ENCODE measurements at regions of chr12 and their contacts with region 1.

Region 1: GRCh38 chr12:39443081-39443928 is at the start of gene KIF21A:
- DNase-seq: peak; percentile 87 to 95 (median 88)
- ATAC-seq: peak; percentile 96
- H3K4me3 ChIP-seq: peak within 1 kb of the TSS; percentile 86
- H3K27ac ChIP-seq: peak within 1 kb of the TSS; percentile 90
- H3K4me1 ChIP-seq: peaks cover 21 to 24% of the 10 kb centered on the region in 2 experiments; a peak in 4 of 5 replicates
- H3K27me3 ChIP-seq: no peaks in the 10 kb centered on the region
- CTCF ChIP-seq: peak; percentile 52 to 95 (median 75)
- EP300 ChIP-seq: no peak
- POLR2A ChIP-seq: peak; percentile 92
- RAD21 ChIP-seq: peak; percentile 48 to 54
- polyA plus RNA-seq, gene KIF21A: 17.7 to 18.8 TPM

Region 2: DNA sequence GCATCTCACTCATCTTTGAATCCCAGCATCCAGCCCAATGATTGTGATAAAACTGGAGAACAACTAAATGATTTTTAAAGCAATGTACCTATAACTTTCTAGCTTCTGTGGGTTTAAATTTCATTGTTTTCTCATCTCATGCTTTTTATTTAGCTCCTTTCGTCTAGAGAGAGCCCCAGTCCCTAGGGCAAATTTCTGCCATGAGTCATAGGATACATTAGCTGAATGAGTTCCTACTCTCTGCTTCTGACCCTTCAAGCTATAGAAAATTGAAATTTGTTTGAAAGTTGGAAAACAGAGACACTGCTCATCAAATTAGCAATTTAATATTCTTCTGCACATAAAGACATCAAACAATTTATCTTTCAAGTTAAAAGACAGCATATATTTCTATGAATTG is 114.3 kb before region 1 on chr12:
- CTCF ChIA-PET with region 1: no interaction called
- POLR2A ChIA-PET with region 1: no interaction called
- in situ Hi-C with region 1: no loop called
- intact Hi-C with region 1: loop called (anchors 5 kb)
- DNase-seq: no peak
- ATAC-seq: no peak
- H3K4me3 ChIP-seq: no peak overlapping the region
- H3K27ac ChIP-seq: no peak overlapping the region
- H3K4me1 ChIP-seq: no peaks in the 10 kb centered on the region
- H3K27me3 ChIP-seq: no peaks in the 10 kb centered on the region
- CTCF ChIP-seq: no peak
- EP300 ChIP-seq: no peak
- POLR2A ChIP-seq: no peak
- RAD21 ChIP-seq: no peak

Region 3: DNA sequence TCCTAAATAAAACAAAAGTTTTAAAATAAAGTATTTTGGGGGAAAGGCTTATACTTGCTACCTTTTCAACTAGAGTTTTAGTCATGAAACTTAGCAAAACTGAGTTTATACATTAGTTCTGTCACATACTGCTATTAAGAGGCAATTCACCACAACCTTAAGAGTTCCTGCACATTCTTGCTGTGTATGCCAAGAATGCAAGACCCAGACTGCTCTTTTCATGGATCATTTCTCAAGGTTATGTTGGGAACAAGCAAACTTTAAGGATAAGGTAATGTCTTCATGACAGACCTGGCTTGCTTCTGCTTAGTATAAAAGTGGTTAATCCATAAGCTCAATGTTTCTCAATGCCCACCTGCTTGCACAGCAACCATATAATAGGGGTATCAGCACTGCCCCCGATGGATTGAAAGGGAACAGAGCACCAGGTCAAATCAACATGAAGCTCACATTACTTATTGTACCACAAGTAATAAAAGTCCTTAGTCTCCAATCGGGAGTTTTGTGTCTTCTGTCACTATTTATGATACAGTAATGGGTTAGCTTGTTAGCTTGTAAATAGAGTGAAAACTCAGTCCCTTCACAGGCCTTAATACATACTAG is 68.0 kb before region 1 on chr12:
- CTCF ChIA-PET with region 1: no interaction called
- POLR2A ChIA-PET with region 1: no interaction called
- in situ Hi-C with region 1: no loop called
- intact Hi-C with region 1: loop called (anchors 5 kb)
- DNase-seq: peak in 1 of 4 experiments; percentile 5
- ATAC-seq: peak; percentile 71
- H3K4me3 ChIP-seq: no peak overlapping the region
- H3K27ac ChIP-seq: no peak overlapping the region
- H3K4me1 ChIP-seq: peaks cover 0 to 8% of the 10 kb centered on the region in 2 experiments; a peak in 1 of 5 replicates
- H3K27me3 ChIP-seq: no peaks in the 10 kb centered on the region
- CTCF ChIP-seq: peak; percentile 8 to 39 (median 14); a peak in 1 of 6 replicates
- EP300 ChIP-seq: no peak
- POLR2A ChIP-seq: no peak
- RAD21 ChIP-seq: no peak

Region 4: GRCh38 chr12:39660101-39660500 is 216.8 kb after region 1 on chr12:
- CTCF ChIA-PET with region 1: no interaction called
- POLR2A ChIA-PET with region 1: no interaction called
- in situ Hi-C with region 1: no loop called
- intact Hi-C with region 1: no loop called
- DNase-seq: no peak
- ATAC-seq: no peak
- H3K4me3 ChIP-seq: no peak overlapping the region
- H3K27ac ChIP-seq: no peak overlapping the region
- H3K4me1 ChIP-seq: no peaks in the 10 kb centered on the region
- H3K27me3 ChIP-seq: no peaks in the 10 kb centered on the region
- CTCF ChIP-seq: no peak
- EP300 ChIP-seq: no peak
- POLR2A ChIP-seq: no peak
- RAD21 ChIP-seq: no peak

Region 5: GRCh38 chr12:40232602-40233001 is 789.3 kb after region 1 on chr12:
- CTCF ChIA-PET with region 1: no interaction called
- POLR2A ChIA-PET with region 1: no interaction called
- in situ Hi-C with region 1: no loop called
- intact Hi-C with region 1: no loop called
- DNase-seq: no peak
- ATAC-seq: no peak
- H3K4me3 ChIP-seq: no peak overlapping the region
- H3K27ac ChIP-seq: no peak overlapping the region
- H3K4me1 ChIP-seq: no peaks in the 10 kb centered on the region
- H3K27me3 ChIP-seq: no peaks in the 10 kb centered on the region
- CTCF ChIP-seq: no peak
- EP300 ChIP-seq: no peak
- POLR2A ChIP-seq: no peak
- RAD21 ChIP-seq: no peak